Mammary epithelial cell (primary cell): ENCODE measurements at regions of chr15 and their contacts with region 1.

Region 1: DNA sequence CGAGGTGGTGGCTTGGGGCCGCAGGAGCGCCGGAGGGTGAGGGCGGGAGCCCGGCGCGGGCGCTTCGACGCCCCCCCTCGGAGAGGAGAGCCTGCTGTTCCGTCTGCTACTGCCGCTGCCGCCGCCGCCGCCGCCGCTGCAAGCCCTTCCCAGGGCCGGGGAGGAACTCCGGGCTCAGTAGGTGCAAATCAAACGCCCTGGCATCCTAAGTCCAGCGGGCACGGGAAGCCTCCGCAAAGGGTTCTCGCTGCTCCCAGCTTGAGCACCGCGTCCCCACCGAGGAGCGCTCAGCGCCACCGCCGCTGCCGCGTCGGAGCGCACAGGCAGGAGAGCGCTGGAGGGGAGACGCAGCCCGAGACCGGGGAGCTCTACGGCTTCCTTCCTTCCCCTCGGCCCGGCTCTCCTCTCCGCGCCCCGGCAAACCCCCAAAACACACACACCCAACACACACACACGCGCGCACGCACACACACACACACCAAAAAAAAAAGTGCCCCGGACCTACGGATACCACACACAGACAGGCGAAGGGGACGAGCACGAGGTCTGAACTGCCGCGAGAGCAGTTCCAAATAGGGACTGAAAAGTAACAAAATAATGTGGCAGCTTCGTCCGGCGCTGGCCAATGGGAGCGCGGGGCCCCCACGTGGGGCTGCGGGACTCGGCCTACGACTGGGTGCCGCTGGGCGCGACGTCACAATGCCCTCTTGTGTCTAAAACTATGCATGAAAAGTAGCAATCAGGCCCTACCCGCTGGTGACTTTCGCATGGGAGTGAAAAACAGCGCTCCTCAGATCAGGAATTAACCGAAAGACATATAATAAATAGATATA is at the start of gene TLE3:
- DNase-seq: peak; percentile 98
- H3K4me3 ChIP-seq: peak within 1 kb of the TSS; percentile 64 to 98 (median 70)
- H3K27ac ChIP-seq: peak within 1 kb of the TSS; percentile 81
- H3K4me1 ChIP-seq: peaks cover 41% of the 10 kb centered on the region
- H3K27me3 ChIP-seq: peaks cover 8% of the 10 kb centered on the region
- CTCF ChIP-seq: peak; percentile 2 to 43
- total RNA-seq, gene TLE3: 27.6 to 32.0 TPM

Region 2: DNA sequence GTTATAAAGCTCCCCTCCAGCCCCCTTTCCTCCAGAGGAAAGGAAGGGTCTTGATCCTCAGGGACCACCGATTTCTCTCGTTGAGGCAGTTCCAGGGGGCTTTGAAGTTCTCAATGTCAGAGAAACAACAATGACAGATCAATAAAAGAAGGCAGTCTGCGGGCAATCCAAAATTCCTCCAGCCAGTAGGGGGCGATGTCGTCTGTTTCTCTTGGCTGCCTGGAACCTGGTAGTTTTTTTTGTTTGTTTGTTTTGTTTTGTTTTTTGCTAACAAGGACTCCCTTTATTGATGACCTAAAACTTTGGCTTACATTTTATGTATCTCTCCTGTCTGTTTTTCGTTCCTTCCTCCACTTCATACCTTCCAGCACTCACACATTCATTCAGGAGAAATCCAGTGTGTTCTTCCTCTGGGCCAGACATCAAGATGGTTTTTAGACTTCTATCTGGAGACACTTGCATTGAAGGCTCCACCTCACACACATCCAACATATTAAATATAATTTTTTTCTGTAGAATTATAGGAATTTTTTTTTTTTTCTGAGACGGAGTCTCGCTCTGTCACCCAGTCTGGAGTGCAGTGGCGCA is 368.3 kb before region 1 on chr15:
- CTCF ChIA-PET with region 1: no interaction called
- dilution Hi-C with region 1: no loop called
- in situ Hi-C with region 1: no loop called
- intact Hi-C with region 1: loop called (anchors 2 kb)
- DNase-seq: no peak
- H3K4me3 ChIP-seq: no peak overlapping the region
- H3K27ac ChIP-seq: no peak overlapping the region
- H3K4me1 ChIP-seq: no peaks in the 10 kb centered on the region
- H3K27me3 ChIP-seq: peaks cover 2% of the 10 kb centered on the region
- CTCF ChIP-seq: peak; percentile 73

Region 3: GRCh38 chr15:70083946-70084345 is 13.6 kb before region 1 on chr15:
- CTCF ChIA-PET with region 1: no interaction called
- dilution Hi-C with region 1: no loop called
- in situ Hi-C with region 1: no loop called
- intact Hi-C with region 1: no loop called
- DNase-seq: no peak
- H3K4me3 ChIP-seq: no peak overlapping the region
- H3K27ac ChIP-seq: no peak overlapping the region
- H3K4me1 ChIP-seq: no peaks in the 10 kb centered on the region
- H3K27me3 ChIP-seq: no peaks in the 10 kb centered on the region
- CTCF ChIP-seq: no peak

Region 4: DNA sequence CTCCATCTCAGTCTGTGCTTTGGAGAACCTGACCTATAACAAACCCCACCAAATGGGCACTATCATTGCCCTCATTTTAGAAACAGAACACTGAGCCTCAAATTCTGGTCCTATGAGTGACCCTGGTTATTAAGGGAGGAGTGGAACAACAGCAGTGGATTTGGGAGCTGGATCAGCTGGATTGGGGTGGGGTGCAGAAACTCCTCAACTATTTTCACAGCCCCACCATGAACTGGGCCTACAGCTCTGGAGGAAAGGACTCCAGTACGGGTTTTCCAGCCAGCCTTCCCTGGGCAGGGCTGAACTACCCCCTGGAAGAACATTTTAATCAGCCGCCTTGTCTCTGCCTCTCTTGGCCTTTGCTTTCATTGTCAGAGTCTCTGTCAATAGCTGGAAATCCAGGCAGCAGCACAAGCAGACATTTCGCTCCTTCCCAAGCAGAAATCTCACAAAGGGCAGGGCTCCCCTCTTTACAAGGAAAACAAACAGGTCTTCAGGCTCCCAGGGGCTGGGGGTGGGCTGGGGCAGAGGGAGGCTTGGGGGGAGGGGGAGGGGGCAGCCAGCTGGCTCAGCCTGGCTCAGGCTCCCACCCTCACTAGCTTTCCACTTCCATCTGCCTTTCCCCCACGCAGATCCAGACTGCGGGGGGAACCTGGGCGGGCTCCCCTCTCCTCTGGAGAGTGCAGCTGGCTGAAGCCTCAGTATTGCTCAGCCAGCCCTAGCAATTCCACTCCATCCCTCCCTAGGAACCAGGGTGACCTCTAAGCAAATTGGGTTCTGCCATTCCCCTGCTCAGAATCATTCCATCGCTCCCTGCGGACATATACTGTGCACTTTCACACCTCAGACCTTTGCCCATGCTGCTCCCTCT is 13.9 kb after region 1 on chr15:
- CTCF ChIA-PET with region 1: no interaction called
- dilution Hi-C with region 1: no loop called
- in situ Hi-C with region 1: no loop called
- intact Hi-C with region 1: loop called (anchors 1 kb)
- DNase-seq: peak; percentile 67
- H3K4me3 ChIP-seq: no peak overlapping the region
- H3K27ac ChIP-seq: no peak overlapping the region
- H3K4me1 ChIP-seq: peaks cover 4% of the 10 kb centered on the region
- H3K27me3 ChIP-seq: no peaks in the 10 kb centered on the region
- CTCF ChIP-seq: no peak

Region 5: GRCh38 chr15:70376929-70377691 is 279.6 kb after region 1 on chr15:
- CTCF ChIA-PET with region 1: no interaction called
- dilution Hi-C with region 1: no loop called
- in situ Hi-C with region 1: no loop called
- intact Hi-C with region 1: loop called (anchors 5 kb)
- DNase-seq: peak; percentile 43
- H3K4me3 ChIP-seq: peak overlapping the region in 1 of 3 experiments; percentile 24
- H3K27ac ChIP-seq: no peak overlapping the region
- H3K4me1 ChIP-seq: peaks cover 30% of the 10 kb centered on the region
- H3K27me3 ChIP-seq: no peaks in the 10 kb centered on the region
- CTCF ChIP-seq: no peak

Region 6: GRCh38 chr15:70488002-70488605 is 390.6 kb after region 1 on chr15:
- CTCF ChIA-PET with region 1: no interaction called
- dilution Hi-C with region 1: no loop called
- in situ Hi-C with region 1: no loop called
- intact Hi-C with region 1: loop called (anchors 1 kb)
- DNase-seq: peak; percentile 60
- H3K4me3 ChIP-seq: no peak overlapping the region
- H3K27ac ChIP-seq: no peak overlapping the region
- H3K4me1 ChIP-seq: peaks cover 22% of the 10 kb centered on the region
- H3K27me3 ChIP-seq: peaks cover 11% of the 10 kb centered on the region
- CTCF ChIP-seq: peak; percentile 98 to 99